ENCODE measurements at regions of chr20 and their contacts with region 1.

Region 1: GRCh38 chr20:11716239-11716944 is 201.3 kb upstream of the BTBD3 start:
- DNase-seq: peak; percentile 29
- ATAC-seq: peak; percentile 79
- H3K4me3 Mint-ChIP-seq: no peak overlapping the region
- H3K27ac Mint-ChIP-seq: no peak overlapping the region
- H3K4me1 Mint-ChIP-seq: peaks cover 55% of the 10 kb centered on the region
- H3K27me3 Mint-ChIP-seq: no peaks in the 10 kb centered on the region; the same call in 1 of the 2 replicates
- CTCF ChIP-seq: peak; percentile 19; the same call in 1 of the 2 replicates

Region 2: DNA sequence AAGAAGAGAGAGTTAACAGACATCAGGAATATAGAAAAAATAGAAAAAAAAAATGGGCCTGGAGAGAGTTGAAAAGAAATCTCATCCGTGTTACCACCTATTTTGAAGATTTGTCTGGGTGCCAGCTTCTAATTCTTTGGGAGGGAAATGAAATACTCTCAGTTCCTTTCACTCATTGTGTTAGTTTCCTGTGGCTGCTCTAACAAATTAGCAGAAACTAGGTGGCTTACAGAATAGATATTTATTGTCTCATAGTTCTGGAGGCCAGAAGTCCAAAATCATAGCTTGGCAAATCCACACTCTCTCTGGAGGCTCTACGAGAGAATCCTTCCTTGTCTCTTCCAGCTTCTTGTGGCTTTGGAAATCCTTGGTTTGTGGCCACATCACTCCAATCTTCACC is 23.8 kb before region 1 on chr20:
- CTCF ChIA-PET with region 1: interaction called, 10 read pairs
- POLR2A ChIA-PET with region 1: no interaction called
- DNase-seq: no peak
- ATAC-seq: no peak
- H3K4me3 Mint-ChIP-seq: no peak overlapping the region
- H3K27ac Mint-ChIP-seq: no peak overlapping the region
- H3K4me1 Mint-ChIP-seq: peaks cover 13% of the 10 kb centered on the region; the same call in 1 of the 2 replicates
- H3K27me3 Mint-ChIP-seq: peaks cover 9% of the 10 kb centered on the region
- CTCF ChIP-seq: no peak

Region 3: GRCh38 chr20:11796026-11796425 is 79.6 kb after region 1 on chr20:
- CTCF ChIA-PET with region 1: no interaction called
- POLR2A ChIA-PET with region 1: no interaction called
- DNase-seq: no peak
- ATAC-seq: no peak
- H3K4me3 Mint-ChIP-seq: no peak overlapping the region
- H3K27ac Mint-ChIP-seq: no peak overlapping the region
- H3K4me1 Mint-ChIP-seq: peaks cover 26% of the 10 kb centered on the region
- H3K27me3 Mint-ChIP-seq: peaks cover 11% of the 10 kb centered on the region
- CTCF ChIP-seq: no peak